ENCODE measurements at regions of chr14 and their contacts with region 1.

Region 1: DNA sequence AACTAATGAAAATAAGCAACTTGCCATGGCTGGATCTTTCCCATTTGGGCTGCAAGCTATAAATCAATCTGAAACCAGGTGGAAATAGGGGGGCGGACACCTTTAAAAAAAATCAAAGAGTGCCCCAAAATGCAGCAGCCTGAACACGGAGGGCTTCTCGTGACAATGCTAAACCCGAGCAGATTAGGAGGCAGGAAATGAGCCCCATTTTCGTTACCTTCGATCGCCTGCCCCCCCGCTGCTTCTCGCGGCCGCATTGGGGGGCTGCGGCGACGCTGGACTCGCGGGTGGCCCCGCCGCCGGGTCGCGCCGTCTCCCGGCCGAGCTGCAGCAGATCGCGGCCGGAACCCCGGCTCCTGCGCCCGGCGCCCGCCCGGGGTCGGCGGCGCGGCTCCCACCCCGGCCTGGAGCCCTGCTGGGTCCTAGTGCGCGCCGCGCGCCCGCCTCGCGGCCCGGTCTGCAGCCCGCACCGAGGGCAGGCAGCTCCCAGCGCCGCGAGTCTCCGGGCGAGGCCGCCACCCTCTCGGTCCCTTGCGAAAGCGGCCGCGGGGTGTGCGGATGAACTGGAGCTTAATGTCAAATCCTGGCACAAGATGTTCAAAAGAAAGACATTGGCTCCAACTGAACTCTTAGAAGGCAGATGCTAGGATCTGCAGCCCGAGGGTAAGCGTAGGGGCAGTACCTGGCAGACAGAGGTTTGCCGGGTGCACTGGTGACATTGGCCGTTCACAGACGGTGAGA is 201.9 kb upstream of the FOXN3 start:
- DNase-seq: peak; percentile 60
- H3K4me3 Mint-ChIP-seq: peak overlapping the region; percentile 86
- H3K27ac Mint-ChIP-seq: peak overlapping the region; percentile 98
- H3K4me1 Mint-ChIP-seq: peaks cover 64% of the 10 kb centered on the region
- H3K27me3 Mint-ChIP-seq: no peaks in the 10 kb centered on the region

Region 2: DNA sequence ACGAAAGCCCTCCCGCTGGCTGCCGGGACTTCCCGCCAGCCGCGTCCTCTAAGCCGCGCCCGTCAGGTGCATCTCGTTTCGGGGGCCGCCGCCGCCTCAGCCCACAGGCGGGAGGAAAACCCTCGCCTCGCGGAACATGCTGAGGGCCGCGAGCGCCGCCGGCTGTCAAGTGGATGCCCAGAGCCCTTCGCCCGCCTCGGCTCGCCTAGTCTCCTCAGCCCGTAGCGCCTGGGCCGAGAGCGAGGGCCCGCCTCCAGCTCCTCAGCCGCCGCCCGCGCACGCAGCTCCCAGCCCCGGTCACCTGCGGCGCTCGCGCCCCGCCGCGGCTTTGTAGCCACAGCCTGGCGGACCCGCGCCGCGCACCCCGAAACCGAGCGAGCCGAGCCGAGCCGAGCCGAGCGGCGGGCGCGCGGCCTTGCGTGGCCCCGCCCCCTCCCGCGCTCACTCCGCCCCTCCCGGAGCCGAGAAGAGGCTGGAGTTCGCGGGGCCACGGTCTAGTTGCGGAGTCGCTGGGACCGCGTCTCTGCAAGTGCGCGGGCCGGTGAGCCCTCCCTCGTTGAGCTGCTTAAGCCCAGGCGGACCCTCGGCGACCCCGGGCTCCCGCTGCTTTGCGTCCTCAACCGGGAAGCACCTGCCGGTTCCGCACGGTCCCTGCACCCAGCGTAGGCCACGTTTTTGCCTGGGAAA is 826.3 kb before region 1 on chr14 and contains the start of gene EML5:
- CTCF ChIA-PET with region 1: no interaction called
- intact Hi-C with region 1: loop called (anchors 5 kb)
- DNase-seq: peak; percentile 86
- H3K4me3 Mint-ChIP-seq: peak within 1 kb of the TSS; percentile 88
- H3K27ac Mint-ChIP-seq: peak within 1 kb of the TSS; percentile 71
- H3K4me1 Mint-ChIP-seq: peaks cover 18% of the 10 kb centered on the region
- H3K27me3 Mint-ChIP-seq: no peaks in the 10 kb centered on the region
- total RNA-seq, gene EML5: 3.7 to 3.8 TPM

Region 3: DNA sequence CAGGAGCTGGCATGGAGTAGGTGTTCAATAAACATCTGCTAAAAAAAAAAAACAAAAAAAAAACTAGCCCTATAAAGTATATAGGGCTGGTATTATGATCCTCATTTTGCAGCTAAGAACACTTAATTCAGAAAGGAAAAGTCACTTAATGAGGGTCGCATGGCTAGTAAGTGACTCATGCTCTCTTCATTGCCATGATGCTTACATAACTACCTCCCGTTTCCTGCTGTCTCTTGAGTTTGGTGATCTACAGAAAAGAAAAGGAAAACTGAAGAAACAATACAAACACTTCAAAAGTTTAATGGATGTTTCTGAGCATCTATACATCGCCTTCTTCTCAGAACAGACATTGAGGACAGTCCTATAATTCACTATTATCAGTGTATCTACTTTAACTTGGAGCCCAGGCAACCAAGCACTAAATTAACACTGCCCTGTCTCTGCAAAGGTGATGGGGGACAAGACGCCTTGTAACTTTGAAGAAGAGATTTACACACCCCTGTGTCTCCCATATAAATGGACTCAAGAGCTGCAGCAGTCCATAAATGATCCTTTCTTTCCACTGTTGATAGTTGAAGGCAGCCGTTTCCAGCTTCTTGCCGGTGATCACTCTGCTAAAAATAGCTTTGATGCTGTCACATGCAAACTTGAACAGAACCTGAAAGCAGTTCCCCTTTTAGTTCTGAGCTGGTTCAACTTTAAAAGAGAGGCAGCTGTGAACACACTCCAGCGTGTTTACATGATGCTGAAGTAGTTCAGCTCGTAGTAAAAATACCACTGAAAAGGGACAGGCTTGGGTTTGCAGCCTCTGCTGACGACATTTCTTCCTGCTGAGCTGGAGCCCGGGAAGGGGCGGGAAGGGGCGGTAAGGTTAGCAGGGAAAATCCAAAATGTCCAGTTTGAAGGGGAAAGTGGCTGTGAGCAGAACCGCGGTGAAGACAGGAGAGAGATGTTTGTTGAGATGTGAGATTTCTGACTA is 315.2 kb before region 1 on chr14:
- CTCF ChIA-PET with region 1: no interaction called
- intact Hi-C with region 1: loop called (anchors 2 kb)
- DNase-seq: peak; percentile 61
- H3K4me3 Mint-ChIP-seq: peak overlapping the region; percentile 62
- H3K27ac Mint-ChIP-seq: peak overlapping the region; percentile 92
- H3K4me1 Mint-ChIP-seq: peaks cover 67% of the 10 kb centered on the region
- H3K27me3 Mint-ChIP-seq: no peaks in the 10 kb centered on the region

Region 4: DNA sequence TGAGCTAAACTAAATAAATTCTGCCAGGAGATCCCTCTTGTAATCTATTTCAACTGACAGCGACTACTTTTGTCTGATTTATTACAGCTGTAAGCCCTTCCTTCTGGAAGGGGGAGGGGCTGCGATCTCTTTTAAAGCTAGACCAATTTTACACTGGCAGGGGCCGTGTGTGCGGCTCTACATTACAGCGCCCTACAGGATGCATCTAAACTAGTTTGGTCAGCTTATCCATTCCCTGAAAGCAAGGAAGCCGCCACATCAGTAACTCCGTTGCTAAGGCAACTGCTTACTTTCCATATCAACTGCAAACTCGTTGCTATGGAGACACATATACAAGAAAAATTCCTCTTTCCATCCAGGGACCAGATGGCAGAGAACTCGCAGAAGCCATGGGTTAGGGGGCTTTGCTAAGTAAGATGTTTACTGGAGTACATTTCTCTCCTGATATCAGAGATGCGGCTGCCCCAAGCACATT is 219.3 kb before region 1 on chr14:
- CTCF ChIA-PET with region 1: no interaction called
- intact Hi-C with region 1: no loop called
- DNase-seq: no peak
- H3K4me3 Mint-ChIP-seq: no peak overlapping the region
- H3K27ac Mint-ChIP-seq: no peak overlapping the region
- H3K4me1 Mint-ChIP-seq: peaks cover 65% of the 10 kb centered on the region
- H3K27me3 Mint-ChIP-seq: no peaks in the 10 kb centered on the region

Region 5: GRCh38 chr14:89430391-89431236 is 188.4 kb before region 1 on chr14:
- CTCF ChIA-PET with region 1: interaction called, 6 read pairs
- intact Hi-C with region 1: loop called (anchors 1 kb)
- DNase-seq: peak; percentile 80
- H3K4me3 Mint-ChIP-seq: peak overlapping the region; percentile 81
- H3K27ac Mint-ChIP-seq: peak overlapping the region; percentile 96
- H3K4me1 Mint-ChIP-seq: peaks cover 70% of the 10 kb centered on the region
- H3K27me3 Mint-ChIP-seq: no peaks in the 10 kb centered on the region

Region 6: GRCh38 chr14:89641495-89642175 is 22.7 kb after region 1 on chr14:
- CTCF ChIA-PET with region 1: interaction called, 6 read pairs
- intact Hi-C with region 1: loop called (anchors 1 kb)
- DNase-seq: peak; percentile 61
- H3K4me3 Mint-ChIP-seq: peak overlapping the region; percentile 57
- H3K27ac Mint-ChIP-seq: peak overlapping the region; percentile 90
- H3K4me1 Mint-ChIP-seq: peaks cover 62% of the 10 kb centered on the region
- H3K27me3 Mint-ChIP-seq: no peaks in the 10 kb centered on the region

Region 7: DNA sequence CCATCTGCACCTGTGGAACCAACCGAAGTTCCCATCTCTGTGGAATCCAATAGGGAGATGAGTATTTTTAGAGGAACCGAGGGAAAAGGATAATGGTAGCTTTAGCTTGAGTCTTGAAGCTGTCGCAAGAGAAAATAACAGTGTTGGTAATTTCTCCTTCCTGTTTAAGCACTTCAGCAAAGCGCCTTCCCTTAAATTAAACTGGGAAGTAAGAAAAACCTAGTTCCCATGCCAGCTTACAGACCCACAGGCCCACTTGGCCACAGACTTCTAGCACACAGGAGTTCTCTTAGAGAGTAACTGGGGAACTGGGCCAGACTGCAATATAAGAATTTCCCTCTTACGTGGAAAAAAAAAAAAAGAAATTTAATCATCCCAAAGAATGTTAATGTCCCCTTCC is 111.7 kb after region 1 on chr14:
- CTCF ChIA-PET with region 1: no interaction called
- intact Hi-C with region 1: no loop called
- DNase-seq: no peak
- H3K4me3 Mint-ChIP-seq: no peak overlapping the region
- H3K27ac Mint-ChIP-seq: no peak overlapping the region
- H3K4me1 Mint-ChIP-seq: peaks cover 20% of the 10 kb centered on the region
- H3K27me3 Mint-ChIP-seq: no peaks in the 10 kb centered on the region

Region 8: DNA sequence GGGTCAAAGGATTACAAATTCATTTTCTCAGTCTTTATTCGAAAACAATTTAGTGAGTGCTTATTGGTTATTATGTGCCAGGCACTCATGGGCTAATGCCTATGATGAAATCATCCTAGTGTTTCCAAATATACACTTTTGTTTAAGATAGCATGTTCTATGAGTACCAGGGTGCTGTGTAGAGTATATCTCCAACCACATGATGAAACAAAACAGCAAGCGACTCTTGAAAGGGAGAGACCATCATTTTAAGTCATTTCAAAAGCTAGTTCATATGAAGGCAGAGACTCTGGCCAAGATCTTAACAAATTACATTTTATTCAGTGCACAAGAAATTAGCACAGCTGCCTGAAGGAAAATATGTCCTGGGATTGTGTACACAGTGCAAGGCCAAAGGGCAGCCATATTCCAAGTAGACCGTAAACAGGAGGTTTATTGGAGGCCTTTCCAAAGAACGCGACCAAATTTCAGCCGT is 131.3 kb after region 1 on chr14:
- CTCF ChIA-PET with region 1: no interaction called
- intact Hi-C with region 1: loop called (anchors 1 kb)
- DNase-seq: no peak
- H3K4me3 Mint-ChIP-seq: no peak overlapping the region
- H3K27ac Mint-ChIP-seq: no peak overlapping the region
- H3K4me1 Mint-ChIP-seq: peaks cover 26% of the 10 kb centered on the region
- H3K27me3 Mint-ChIP-seq: no peaks in the 10 kb centered on the region